ENCODE measurements at regions of chr18 and their contacts with region 1.

Region 1: DNA sequence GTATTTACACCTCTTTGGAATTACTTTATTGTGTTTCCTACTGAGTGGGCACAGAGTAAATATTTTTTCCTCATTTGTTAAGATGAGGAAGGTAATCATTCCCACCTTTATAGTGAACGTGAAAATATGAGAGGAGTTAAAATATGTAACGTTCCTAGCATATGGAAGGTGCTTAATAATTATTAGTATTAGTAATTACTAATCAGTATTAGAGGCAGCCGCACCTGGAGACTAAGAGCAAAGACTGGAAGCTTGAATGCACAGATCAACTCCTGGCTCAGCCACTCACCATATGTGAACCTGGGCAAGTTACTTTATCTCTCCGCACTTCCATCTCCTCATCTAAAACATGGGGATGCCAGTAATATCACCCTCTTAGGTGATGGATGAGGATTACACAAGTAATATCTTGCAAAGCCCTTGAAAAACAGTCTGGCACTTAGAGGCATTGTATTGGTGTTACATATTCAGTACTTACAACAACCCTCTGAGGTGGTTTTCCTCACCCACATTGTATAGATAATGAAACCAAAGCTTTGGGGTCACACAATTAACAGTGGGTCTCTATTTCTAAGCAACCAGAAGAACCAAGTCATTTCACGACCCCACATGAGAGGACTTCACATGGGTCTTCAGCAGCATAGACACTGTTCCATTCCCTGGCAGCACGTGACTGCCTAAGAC is 100.3 kb upstream of the KCTD1 start:
- DNase-seq: no peak
- H3K4me3 ChIP-seq: no peak overlapping the region
- H3K27ac ChIP-seq: no peak overlapping the region
- H3K4me1 ChIP-seq: no peaks in the 10 kb centered on the region
- H3K27me3 ChIP-seq: no peaks in the 10 kb centered on the region
- CTCF ChIP-seq: no peak

Region 2: GRCh38 chr18:26342648-26343047 is 306.0 kb before region 1 on chr18:
- intact Hi-C with region 1: no loop called
- DNase-seq: peak in 2 of 5 donors; percentile 51 to 62
- H3K4me3 ChIP-seq: no peak overlapping the region
- H3K27ac ChIP-seq: no peak overlapping the region
- H3K4me1 ChIP-seq: no peaks in the 10 kb centered on the region
- H3K27me3 ChIP-seq: no peaks in the 10 kb centered on the region
- CTCF ChIP-seq: no peak

Region 3: DNA sequence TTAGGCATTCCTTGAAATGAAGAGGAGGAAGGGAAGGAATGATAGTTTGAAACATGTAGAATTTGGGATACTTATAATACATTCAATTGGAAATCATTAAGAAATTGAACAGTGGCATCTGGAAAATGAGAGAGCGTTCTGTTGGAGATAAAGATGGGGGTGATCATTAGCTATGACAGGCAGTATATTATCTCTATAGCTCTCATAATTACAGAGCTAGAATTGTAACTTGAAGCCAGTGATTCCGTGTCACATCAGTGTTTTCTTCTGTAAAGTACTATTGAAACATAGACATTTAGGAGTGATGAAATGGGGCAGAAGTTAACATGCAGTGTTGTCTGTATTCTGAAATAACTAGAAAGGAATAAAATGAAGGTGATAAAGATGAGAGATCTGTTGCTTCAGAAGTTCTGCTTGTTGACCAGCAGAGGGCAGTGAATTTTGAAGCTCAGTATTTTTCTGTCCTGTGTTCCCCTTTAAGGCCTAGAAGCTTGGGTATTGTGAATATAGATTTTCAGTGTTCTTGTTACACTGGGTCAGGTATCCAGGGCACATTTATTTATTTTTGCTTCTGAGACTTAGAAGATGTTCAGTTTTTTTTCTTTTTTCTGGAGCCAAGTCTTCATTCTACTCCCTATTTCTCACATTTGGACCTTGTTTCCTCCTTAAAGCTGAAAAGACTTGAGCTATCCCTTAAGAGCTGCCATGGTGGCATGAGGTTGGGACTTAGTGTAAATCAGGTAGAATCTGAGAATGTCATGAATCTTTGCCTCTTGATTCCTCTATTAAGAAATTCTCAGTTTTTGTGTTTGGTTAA is 265.0 kb before region 1 on chr18:
- intact Hi-C with region 1: loop called (anchors 5 kb)
- DNase-seq: peak in 2 of 5 donors; percentile 66 to 71
- H3K4me3 ChIP-seq: no peak overlapping the region
- H3K27ac ChIP-seq: no peak overlapping the region
- H3K4me1 ChIP-seq: peaks cover 0 to 7% (median 4%) of the 10 kb centered on the region in 3 donors
- H3K27me3 ChIP-seq: no peaks in the 10 kb centered on the region
- CTCF ChIP-seq: peak; percentile 70

Region 4: DNA sequence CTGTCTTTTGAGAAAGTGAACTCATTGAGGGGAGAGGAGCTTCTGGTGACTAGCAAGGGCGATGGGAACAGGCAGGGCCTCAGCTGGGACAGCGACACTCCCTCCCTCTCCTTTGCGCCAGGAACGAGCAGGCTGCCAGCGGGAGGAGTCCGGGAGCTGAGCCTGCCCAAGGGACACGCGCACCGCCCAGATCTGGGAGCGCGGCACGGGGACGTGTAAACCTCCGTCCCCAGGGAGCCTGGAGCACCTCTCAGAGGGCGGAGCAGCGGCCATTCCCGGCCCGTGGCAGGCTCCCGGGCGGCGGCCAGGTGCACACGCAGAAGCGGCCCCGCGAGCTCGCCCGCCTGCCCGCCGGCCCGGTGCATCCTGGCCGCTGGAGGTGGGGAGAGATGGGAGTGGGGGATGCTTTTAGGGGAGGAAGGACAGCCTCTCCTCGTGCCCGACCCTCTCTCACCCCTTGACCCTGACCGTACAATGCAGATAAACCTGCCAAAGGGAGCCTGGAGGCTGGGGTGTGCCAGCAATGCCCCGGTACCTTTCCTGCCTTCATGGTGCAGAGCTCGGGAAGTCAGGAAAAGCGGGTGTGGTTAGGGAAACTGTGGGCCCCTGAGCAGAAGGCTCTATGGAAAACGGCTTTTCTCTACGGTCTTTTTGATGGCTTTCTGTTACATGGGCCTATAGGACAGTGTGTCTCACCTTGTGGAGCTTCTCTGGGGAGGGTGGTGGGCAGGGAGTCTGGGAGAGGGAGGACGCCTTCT is 214.7 kb after region 1 on chr18:
- intact Hi-C with region 1: no loop called
- DNase-seq: peak; percentile 66 to 91 (median 76)
- H3K4me3 ChIP-seq: peak overlapping the region; percentile 26 to 55 (median 34)
- H3K27ac ChIP-seq: no peak overlapping the region
- H3K4me1 ChIP-seq: no peaks in the 10 kb centered on the region
- H3K27me3 ChIP-seq: no peaks in the 10 kb centered on the region
- CTCF ChIP-seq: no peak